Activated T-helper 1 cell treated with anti-CD3 and anti-CD28 coated beads, Interleukin-12 subunit alpha, Interleukin-12 subunit beta, Interleukin-2, Interleukin-4 antibody, amounts not matched to agents 30 ng/mL and 10 ng/mL and 1 ng/mL, durations not matched to agents 14 hours and 24 hours and 36 hours (primary cell): ENCODE measurements at regions of chr1 and their contacts with region 1.

Region 1: GRCh38 chr1:157369808-157370521 is 182.3 kb downstream of the FCRL5 start:
- DNase-seq: peak; percentile 29
- H3K4me3 Mint-ChIP-seq: no peak overlapping the region
- H3K27ac Mint-ChIP-seq: no peak overlapping the region
- H3K4me1 Mint-ChIP-seq: no peaks in the 10 kb centered on the region
- H3K27me3 Mint-ChIP-seq: peaks cover 20% of the 10 kb centered on the region

Region 2: DNA sequence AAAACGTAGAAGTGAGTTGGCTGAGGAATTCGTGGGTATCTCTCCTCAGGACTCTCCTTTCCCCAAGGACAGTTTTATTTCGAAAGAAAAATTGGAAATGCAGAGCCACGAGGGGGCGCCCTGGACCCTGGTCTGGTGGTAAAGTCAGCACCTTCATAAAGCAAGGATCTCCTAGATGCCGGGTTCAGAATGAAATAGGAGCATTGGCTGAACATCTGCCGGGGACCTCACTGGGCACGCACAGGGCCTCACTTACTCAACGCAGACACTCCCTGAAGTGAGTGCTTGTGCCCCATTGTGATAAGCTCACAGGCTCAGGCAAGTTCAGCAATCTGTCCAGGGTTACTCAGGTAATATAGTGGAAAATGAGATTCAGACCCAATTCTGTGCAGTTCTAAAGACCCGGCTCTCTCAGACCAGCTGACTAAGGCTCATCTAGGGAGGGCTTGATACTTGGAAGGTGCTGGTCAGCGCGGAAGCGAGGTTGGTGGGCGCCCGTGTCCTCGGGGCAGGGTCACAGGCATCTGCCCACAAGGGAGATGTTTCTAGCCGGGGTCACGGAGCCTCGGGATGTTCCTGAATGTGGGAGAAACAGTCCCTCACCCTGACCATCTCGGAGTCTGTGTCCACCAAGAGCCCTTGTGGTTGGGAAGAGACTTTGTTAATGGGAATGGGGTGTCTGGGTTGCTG is 176.1 kb before region 1 on chr1:
- intact Hi-C with region 1: loop called (anchors 10 kb)
- DNase-seq: peak; percentile 20
- H3K4me3 Mint-ChIP-seq: no peak overlapping the region
- H3K27ac Mint-ChIP-seq: no peak overlapping the region
- H3K4me1 Mint-ChIP-seq: peaks cover 4% of the 10 kb centered on the region
- H3K27me3 Mint-ChIP-seq: peaks cover 21% of the 10 kb centered on the region